Activated T-helper 1 cell treated with anti-CD3 and anti-CD28 coated beads, Interleukin-12 subunit alpha, Interleukin-12 subunit beta, Interleukin-2, Interleukin-4 antibody, amounts not matched to agents 30 ng/mL and 10 ng/mL and 1 ng/mL, durations not matched to agents 14 hours and 24 hours and 36 hours (primary cell): ENCODE measurements at regions of chr12 and their contacts with region 1.

Region 1: GRCh38 chr12:112382232-112382796 is at the start of gene HECTD4:
- DNase-seq: peak; percentile 92
- H3K4me3 Mint-ChIP-seq: peak within 1 kb of the TSS; percentile 95
- H3K27ac Mint-ChIP-seq: peak within 1 kb of the TSS; percentile 91
- H3K4me1 Mint-ChIP-seq: peaks cover 31% of the 10 kb centered on the region
- H3K27me3 Mint-ChIP-seq: peaks cover under 1% of the 10 kb centered on the region
- total RNA-seq, gene HECTD4: 32.3 and 36.9 TPM in 2 replicates

Region 2: GRCh38 chr12:111685744-111686517 is 696.4 kb before region 1 on chr12 and contains the starts of genes ACAD10 and BRAP:
- intact Hi-C with region 1: loop called (anchors 5 kb)
- DNase-seq: peak; percentile 96
- H3K4me3 Mint-ChIP-seq: peak within 1 kb of the TSS; percentile 97
- H3K27ac Mint-ChIP-seq: peak within 1 kb of the TSS; percentile 98
- H3K4me1 Mint-ChIP-seq: peaks cover 31% of the 10 kb centered on the region
- H3K27me3 Mint-ChIP-seq: no peaks in the 10 kb centered on the region
- total RNA-seq, gene ACAD10: 21.2 and 24.2 TPM in 2 replicates
- total RNA-seq, gene BRAP: 22.1 and 22.2 TPM in 2 replicates

Region 3: DNA sequence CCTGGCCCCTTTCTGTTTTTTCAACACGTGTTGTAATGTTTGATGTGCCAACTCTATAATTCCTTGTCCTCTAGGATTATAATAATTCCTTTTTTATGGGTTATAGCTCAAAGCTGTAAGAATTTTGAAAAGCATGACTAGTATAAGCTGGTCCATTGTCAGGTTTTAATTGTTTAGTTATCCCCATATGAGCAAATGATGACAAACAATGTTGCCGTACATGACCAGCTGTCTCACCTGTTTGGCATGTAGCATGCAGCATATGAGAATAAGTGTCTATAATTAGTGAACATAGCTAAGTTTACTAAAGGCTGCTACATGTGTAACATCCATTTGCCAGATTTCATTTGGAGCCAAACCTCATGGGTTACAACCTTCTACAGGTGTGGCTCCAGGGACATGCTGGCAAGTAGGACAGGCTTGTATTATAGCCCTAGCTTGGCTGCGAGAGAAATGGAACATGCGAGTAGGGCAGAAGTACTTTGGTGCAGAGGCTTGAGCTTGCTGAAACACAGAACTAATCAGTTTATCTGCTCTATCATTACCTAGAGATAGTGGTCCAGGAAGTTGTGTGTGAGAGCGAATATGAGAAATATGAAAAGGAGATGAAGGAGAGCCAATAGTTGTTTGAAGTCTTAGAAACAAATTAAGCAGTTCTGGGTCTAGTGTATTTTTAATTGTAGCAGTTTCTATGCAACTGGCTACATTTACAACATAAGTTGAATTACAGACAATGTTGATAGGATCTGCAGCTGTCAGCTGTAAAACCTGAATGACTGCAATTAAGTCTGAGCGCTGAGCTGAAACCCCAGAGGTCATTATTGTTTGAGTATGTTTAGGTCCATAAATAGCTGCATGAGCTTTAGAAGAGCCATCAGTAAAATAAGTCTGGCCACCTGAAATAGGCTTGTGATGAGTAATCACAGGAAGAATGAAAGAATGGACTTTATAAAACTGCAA is 562.8 kb before region 1 on chr12:
- intact Hi-C with region 1: no loop called
- DNase-seq: no peak
- H3K4me3 Mint-ChIP-seq: no peak overlapping the region
- H3K27ac Mint-ChIP-seq: no peak overlapping the region
- H3K4me1 Mint-ChIP-seq: no peaks in the 10 kb centered on the region
- H3K27me3 Mint-ChIP-seq: peaks cover 24% of the 10 kb centered on the region

Region 4: GRCh38 chr12:111942557-111942956 is 439.8 kb before region 1 on chr12:
- intact Hi-C with region 1: loop called (anchors 1 kb)
- DNase-seq: no peak
- H3K4me3 Mint-ChIP-seq: no peak overlapping the region
- H3K27ac Mint-ChIP-seq: peak overlapping the region; percentile 27
- H3K4me1 Mint-ChIP-seq: peaks cover 23% of the 10 kb centered on the region
- H3K27me3 Mint-ChIP-seq: no peaks in the 10 kb centered on the region

Region 5: DNA sequence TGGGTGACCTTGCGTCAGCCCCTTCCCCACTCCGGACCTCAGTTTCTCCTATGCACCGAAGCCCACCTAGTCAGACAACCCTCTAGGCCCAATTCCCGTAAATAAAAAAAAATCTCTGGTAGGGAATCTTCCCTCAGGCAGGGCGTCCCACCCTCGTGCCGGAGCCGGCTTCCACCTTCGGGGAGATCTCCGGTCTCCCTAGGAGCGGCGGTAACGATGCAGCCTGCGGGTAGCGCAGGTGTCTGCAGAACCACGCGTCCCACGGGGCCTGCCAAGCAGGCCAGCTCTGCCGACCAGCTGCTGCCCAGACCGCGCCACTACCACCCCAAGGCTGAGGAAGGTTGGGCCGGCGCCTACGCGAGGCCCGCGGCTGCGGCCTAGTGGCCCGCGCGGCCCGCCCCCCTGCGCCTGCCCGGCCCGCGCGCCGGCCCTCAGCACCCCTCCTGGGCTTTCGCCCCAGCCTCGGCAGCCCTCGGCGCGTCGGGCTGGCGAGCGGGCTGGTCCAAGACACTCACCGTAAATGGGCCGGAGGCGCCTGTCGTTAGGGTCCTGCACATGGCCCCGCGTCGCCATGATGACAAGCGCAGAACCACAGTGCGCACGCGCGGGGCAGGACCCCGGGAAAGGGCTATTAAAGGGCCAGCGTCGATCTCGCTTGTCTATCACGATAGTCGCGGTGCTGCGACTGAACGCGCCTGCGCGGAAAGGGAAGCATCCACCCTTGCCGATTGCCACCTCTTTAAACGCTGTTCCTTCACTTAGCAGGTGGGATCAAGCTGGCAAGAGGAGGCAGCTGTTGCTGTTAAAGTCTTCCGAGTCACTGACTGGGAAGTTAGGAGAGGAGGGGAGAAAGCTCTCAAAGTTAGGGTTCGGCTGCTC is 273.9 kb before region 1 on chr12 and contains the start of gene NAA25:
- intact Hi-C with region 1: loop called (anchors 1 kb)
- DNase-seq: peak; percentile 84
- H3K4me3 Mint-ChIP-seq: peak within 1 kb of the TSS; percentile 99
- H3K27ac Mint-ChIP-seq: peak within 1 kb of the TSS; percentile 98
- H3K4me1 Mint-ChIP-seq: peaks cover 42% of the 10 kb centered on the region
- H3K27me3 Mint-ChIP-seq: no peaks in the 10 kb centered on the region
- total RNA-seq, gene NAA25: 52.2 and 58.1 TPM in 2 replicates

Region 6: DNA sequence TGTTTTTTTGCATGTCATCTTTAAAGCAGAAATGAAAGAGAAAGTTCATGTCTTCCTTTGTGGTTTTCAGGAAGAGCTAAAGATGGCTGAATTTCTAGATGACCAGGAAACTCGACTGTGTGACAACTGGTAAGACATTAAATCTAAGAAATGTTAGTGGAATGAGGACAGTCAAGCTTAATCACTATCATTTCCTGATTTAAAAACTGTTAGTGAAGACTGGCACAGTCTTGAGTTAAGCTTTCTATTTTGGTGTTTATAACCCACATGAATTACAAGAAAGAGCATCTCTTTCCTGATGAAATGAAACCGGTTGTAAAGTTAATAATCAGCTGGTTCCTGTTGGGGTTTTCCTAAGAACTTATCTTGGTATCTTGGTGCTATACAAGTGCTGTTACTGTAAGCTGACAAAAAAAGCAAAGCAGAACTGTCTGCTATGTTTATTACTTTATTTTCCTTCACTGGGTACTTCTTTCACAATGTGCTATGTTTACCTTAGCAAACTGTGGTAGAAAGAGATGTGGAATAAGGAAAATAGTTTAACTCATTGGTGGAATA is 251.8 kb before region 1 on chr12:
- intact Hi-C with region 1: loop called (anchors 1 kb)
- DNase-seq: no peak
- H3K4me3 Mint-ChIP-seq: peak overlapping the region; percentile 77
- H3K27ac Mint-ChIP-seq: peak overlapping the region; percentile 79
- H3K4me1 Mint-ChIP-seq: peaks cover 55% of the 10 kb centered on the region
- H3K27me3 Mint-ChIP-seq: no peaks in the 10 kb centered on the region

Region 7: DNA sequence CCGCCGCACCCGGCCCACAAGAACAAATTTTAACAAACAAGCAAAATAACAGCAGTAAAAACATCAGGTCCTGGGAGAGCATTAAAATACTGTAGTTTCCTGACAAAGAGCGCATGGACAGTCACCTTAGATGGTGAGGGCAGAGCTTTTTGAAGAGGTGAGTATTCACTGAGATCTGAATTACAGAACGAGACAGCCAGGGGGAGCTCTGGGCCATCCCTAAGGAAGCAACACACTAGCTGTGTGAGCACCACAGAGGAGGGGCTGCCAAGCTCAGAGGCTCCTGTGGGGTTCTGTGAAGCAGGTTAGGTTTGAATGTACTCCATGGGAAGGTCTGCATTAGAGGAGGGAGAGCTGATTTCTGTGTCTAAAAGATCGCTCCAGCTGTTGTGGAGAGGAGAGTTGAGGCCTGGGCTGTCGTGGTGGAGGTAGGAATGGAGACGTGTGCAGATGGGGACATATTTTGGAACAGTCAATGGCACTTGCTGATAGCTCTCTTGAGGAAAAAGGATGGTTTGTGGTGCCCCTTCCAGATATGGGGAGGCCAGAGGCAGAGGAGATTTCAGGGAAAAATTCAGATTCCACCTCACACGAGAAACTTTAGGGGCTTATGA is 184.1 kb before region 1 on chr12:
- intact Hi-C with region 1: loop called (anchors 1 kb)
- DNase-seq: peak; percentile 31
- H3K4me3 Mint-ChIP-seq: no peak overlapping the region
- H3K27ac Mint-ChIP-seq: no peak overlapping the region
- H3K4me1 Mint-ChIP-seq: no peaks in the 10 kb centered on the region
- H3K27me3 Mint-ChIP-seq: no peaks in the 10 kb centered on the region

Region 8: GRCh38 chr12:112409064-112409905 is 27.0 kb after region 1 on chr12 and contains the start of gene RPL6:
- intact Hi-C with region 1: loop called (anchors 1 kb)
- DNase-seq: peak; percentile 75
- H3K4me3 Mint-ChIP-seq: peak within 1 kb of the TSS; percentile 100
- H3K27ac Mint-ChIP-seq: peak within 1 kb of the TSS; percentile 100
- H3K4me1 Mint-ChIP-seq: peaks cover 33% of the 10 kb centered on the region
- H3K27me3 Mint-ChIP-seq: no peaks in the 10 kb centered on the region
- total RNA-seq, gene RPL6: 1,690 and 1,698 TPM in 2 replicates